Psoas muscle (tissue), 8 donors: ENCODE measurements at regions of chr11 and their contacts with region 1.

Region 1: DNA sequence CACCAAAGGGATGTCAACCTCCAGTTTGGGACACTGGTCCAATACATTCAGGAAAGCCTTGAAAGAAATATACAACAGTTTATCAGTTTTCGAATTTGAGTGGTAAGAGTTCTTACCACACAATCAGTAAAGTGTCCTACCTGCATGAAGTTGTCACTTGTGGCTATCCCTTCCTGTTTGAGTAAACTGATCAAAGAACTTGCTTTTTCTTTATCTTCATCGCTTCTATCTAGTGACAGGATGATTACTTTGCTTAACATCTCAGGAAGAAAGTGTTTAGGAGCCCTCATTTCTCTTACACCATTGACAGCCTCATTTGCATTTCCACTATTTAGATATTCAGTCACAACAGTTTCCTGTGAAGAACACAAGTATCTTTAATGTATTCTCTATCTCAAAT is 8.4 kb downstream of the EIF4G2 start:
- DNase-seq: no peak
- ATAC-seq: no peak
- H3K4me3 ChIP-seq: no peak overlapping the region
- H3K27ac ChIP-seq: no peak overlapping the region
- H3K4me1 ChIP-seq: peaks cover 25% of the 10 kb centered on the region
- H3K27me3 ChIP-seq: no peaks in the 10 kb centered on the region
- CTCF ChIP-seq: no peak

Region 2: DNA sequence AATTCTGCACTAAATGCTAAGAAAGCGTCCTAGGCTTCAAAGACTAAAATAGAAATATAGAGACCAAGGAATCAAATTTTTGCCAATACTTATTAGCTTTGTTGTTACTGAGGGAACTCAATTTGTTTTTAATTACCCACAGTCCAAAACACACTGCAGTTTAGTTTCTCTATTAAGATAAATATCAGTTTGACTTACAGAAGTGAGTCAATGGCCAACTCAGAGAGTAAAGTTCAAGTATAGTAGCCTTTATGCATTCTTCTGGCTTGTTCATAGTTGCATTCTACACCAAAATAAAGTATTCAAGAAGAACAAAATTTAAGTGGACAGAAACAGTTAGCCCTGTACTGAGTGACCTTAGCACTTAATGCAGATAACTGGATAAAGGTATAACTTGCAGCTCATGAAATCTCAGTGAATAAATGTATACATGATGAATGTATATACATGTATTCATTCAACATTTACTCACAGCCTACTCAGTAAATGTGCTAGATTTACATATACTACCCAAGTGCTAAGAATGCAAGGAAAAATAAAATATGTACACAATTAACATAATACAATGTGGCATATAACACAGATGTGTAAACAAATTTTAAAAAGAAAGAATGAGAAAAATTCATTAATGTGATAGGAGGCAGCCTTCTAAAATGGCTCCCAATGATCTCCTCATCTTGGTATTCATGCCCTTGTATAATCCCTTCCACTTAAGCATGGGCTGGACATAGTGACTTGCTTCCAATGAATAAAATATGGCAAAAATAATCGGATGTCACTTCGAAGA is 249.6 kb before region 1 on chr11:
- intact Hi-C with region 1: no loop called
- DNase-seq: no peak
- ATAC-seq: no peak
- H3K4me3 ChIP-seq: no peak overlapping the region
- H3K27ac ChIP-seq: no peak overlapping the region
- H3K4me1 ChIP-seq: no peaks in the 10 kb centered on the region
- H3K27me3 ChIP-seq: no peaks in the 10 kb centered on the region
- CTCF ChIP-seq: no peak

Region 3: GRCh38 chr11:10762185-10762584 is 38.1 kb before region 1 on chr11:
- intact Hi-C with region 1: loop called (anchors 5 kb)
- DNase-seq: no peak
- ATAC-seq: no peak
- H3K4me3 ChIP-seq: no peak overlapping the region
- H3K27ac ChIP-seq: no peak overlapping the region
- H3K4me1 ChIP-seq: no peaks in the 10 kb centered on the region
- H3K27me3 ChIP-seq: no peaks in the 10 kb centered on the region
- CTCF ChIP-seq: no peak

Region 4: GRCh38 chr11:10818594-10818993 is 18.3 kb after region 1 on chr11:
- intact Hi-C with region 1: no loop called
- DNase-seq: no peak
- ATAC-seq: no peak
- H3K4me3 ChIP-seq: no peak overlapping the region
- H3K27ac ChIP-seq: no peak overlapping the region
- H3K4me1 ChIP-seq: no peaks in the 10 kb centered on the region
- H3K27me3 ChIP-seq: no peaks in the 10 kb centered on the region
- CTCF ChIP-seq: no peak